ENCODE measurements at regions of chr5 and their contacts with region 1.

Region 1: DNA sequence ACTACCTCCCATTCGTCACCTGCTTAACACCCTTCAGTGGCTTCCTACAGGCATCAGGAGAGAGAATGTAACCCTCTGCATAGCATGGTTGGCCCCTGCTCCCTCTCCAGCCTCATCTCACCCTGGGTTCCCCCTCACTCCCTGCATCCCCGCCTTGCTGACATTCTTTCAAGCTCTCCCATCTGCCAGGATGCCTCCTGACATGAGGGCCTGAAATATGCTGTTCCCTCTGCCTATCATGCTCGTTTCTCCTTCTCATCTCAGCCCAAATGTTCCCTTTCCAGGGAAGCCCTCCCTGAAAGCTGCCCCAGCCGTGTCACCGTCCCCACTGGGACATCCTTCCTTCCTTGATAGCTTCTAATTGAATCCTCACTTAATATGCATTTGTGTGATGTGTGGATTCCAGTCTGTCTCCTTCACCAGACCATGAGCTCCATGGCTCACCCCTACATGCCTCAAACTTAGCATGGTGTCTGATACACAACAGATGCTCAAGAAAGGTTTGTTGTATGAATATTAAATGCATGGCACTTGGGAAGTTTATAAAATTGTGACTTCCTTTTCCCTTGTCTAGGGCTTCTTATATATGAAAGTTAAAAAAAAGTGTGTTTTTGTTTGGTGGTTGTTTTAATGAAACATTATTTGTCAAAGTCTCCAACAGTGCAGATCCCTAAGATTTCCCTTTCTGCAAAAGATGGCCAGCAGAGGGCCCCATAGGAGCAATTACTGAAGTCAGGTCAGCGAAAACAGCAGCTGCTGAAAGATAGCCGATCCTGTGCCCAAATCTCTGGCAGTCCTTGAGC is 7.3 kb upstream of the C5orf58 start:
- DNase-seq: peak; percentile 79
- H3K4me3 ChIP-seq: no peak overlapping the region
- H3K27ac ChIP-seq: no peak overlapping the region
- H3K4me1 ChIP-seq: no peaks in the 10 kb centered on the region
- H3K27me3 ChIP-seq: peaks cover 23% of the 10 kb centered on the region

Region 2: DNA sequence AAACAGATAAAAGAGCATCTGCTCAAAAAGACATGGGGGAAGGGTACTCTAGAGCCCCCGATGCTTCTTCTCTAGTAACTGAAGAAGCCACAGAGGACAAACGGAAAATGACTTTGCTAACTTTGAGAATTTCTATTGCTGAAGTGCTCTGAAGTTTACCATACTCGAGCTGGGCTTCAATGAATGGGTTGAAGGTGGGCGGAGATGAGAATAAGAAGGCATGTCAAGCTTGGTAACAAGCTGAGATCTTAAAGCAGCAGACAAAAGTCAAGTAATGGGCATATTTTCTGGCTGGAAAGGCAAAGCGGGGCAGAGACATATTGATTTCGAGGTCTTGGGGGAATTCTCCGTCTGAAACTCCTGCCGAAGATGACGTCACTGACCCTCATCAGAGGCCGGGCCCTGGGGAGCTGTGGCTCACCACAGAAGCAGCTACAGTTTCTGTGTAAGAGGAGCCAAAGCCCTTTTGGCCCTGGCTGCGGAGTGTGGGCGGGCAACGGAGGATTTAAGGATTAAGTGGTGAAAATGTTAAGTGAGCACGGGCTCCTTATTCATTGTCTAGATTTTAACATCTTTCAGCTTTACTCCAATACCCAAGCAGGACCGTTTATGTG is 808.8 kb before region 1 on chr5:
- in situ Hi-C with region 1: no loop called
- DNase-seq: peak; percentile 100
- H3K4me3 ChIP-seq: peak overlapping the region; percentile 47
- H3K27ac ChIP-seq: peak overlapping the region; percentile 84
- H3K4me1 ChIP-seq: peaks cover 64% of the 10 kb centered on the region
- H3K27me3 ChIP-seq: no peaks in the 10 kb centered on the region

Region 3: GRCh38 chr5:169548315-169548714 is 677.2 kb before region 1 on chr5:
- in situ Hi-C with region 1: no loop called
- DNase-seq: peak; percentile 87
- H3K4me3 ChIP-seq: no peak overlapping the region
- H3K27ac ChIP-seq: no peak overlapping the region
- H3K4me1 ChIP-seq: peaks cover 49% of the 10 kb centered on the region
- H3K27me3 ChIP-seq: no peaks in the 10 kb centered on the region

Region 4: DNA sequence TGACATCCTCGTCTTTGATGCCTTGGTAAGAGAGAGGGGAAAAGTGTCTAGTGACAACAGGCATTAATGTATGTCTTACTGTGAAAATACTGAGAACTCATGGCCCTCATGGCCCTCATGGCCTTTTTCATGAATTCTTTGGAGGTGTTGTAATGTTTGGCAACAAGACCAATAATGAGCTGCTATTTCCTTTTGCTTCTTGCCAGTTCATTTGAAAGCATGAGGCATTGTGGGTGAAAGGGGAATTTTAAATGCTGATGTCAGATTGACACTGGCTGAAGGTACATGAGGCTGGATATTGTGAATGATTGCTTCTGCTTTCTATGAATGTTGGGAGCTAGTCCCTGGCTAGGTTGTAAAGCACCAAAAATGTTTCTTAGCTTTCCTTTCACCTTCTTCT is 509.2 kb before region 1 on chr5:
- in situ Hi-C with region 1: no loop called
- DNase-seq: peak; percentile 77
- H3K4me3 ChIP-seq: no peak overlapping the region
- H3K27ac ChIP-seq: peak overlapping the region; percentile 30
- H3K4me1 ChIP-seq: peaks cover 38% of the 10 kb centered on the region
- H3K27me3 ChIP-seq: no peaks in the 10 kb centered on the region

Region 5: DNA sequence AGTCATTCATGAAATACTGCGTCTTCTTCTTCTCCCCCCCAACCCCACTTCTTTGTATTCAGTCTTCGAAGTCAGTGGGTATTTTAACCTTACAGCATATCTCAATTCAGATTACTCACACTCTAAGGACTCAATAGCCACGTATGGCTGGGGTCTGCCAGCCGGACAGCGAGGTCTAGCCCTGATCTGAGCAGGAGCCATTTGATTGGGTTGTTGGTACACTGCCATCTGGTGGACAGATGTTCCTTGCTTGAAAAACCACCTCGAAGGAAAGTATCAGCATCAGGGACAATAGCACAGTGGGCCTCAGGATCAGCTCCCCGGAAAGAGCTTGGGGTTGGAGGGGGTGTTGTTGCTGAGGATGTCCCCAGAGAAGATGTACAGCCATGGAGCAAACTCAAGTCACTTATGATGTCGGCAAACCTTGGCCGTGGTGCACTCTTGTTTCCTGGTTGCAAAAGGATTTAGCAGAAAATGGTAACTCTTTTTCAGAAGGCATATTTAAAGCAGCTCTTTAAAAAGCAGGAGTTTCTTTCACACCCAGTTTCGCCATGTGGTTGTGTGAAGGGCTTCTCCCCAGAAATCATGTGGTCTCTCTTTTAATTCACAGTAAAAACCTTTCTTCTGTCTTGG is 195.4 kb after region 1 on chr5:
- in situ Hi-C with region 1: loop called (anchors 5 kb)
- DNase-seq: peak; percentile 72
- H3K4me3 ChIP-seq: no peak overlapping the region
- H3K27ac ChIP-seq: no peak overlapping the region
- H3K4me1 ChIP-seq: no peaks in the 10 kb centered on the region
- H3K27me3 ChIP-seq: peaks cover 57% of the 10 kb centered on the region

Region 6: GRCh38 chr5:170623576-170624181 is 398.2 kb after region 1 on chr5:
- in situ Hi-C with region 1: loop called (anchors 10 kb)
- DNase-seq: peak; percentile 69
- H3K4me3 ChIP-seq: no peak overlapping the region
- H3K27ac ChIP-seq: no peak overlapping the region
- H3K4me1 ChIP-seq: no peaks in the 10 kb centered on the region
- H3K27me3 ChIP-seq: peaks cover 44% of the 10 kb centered on the region

Region 7: GRCh38 chr5:171201310-171201709 is 975.8 kb after region 1 on chr5:
- in situ Hi-C with region 1: no loop called
- DNase-seq: no peak
- H3K4me3 ChIP-seq: no peak overlapping the region
- H3K27ac ChIP-seq: no peak overlapping the region
- H3K4me1 ChIP-seq: no peaks in the 10 kb centered on the region
- H3K27me3 ChIP-seq: no peaks in the 10 kb centered on the region

Measured in GM23248 (cell line).